Heart right ventricle (tissue), 16 donors: ENCODE measurements at regions of chr6 and their contacts with region 1.

Region 1: GRCh38 chr6:135535989-135536414 is 38.5 kb upstream of the AHI1 start:
- DNase-seq: peak in 1 of 2 donors; percentile 12
- ATAC-seq: peak in 2 of 8 donors; percentile 48 to 49
- H3K4me3 ChIP-seq: no peak overlapping the region
- H3K27ac ChIP-seq: no peak overlapping the region
- H3K4me1 ChIP-seq: peaks cover 0 to 20% (median 0%) of the 10 kb centered on the region in 9 donors
- H3K27me3 ChIP-seq: no peaks in the 10 kb centered on the region
- CTCF ChIP-seq: peak; percentile 51 to 85 (median 75)

Region 2: GRCh38 chr6:135759831-135760230 is 223.8 kb after region 1 on chr6:
- intact Hi-C with region 1: loop called in 1 of 10 experiments (anchors 10 kb)
- DNase-seq: no peak
- ATAC-seq: no peak
- H3K4me3 ChIP-seq: no peak overlapping the region
- H3K27ac ChIP-seq: no peak overlapping the region
- H3K4me1 ChIP-seq: no peaks in the 10 kb centered on the region
- H3K27me3 ChIP-seq: no peaks in the 10 kb centered on the region
- CTCF ChIP-seq: peak in 3 of 9 donors; percentile 12 to 29 (median 14)

Region 3: DNA sequence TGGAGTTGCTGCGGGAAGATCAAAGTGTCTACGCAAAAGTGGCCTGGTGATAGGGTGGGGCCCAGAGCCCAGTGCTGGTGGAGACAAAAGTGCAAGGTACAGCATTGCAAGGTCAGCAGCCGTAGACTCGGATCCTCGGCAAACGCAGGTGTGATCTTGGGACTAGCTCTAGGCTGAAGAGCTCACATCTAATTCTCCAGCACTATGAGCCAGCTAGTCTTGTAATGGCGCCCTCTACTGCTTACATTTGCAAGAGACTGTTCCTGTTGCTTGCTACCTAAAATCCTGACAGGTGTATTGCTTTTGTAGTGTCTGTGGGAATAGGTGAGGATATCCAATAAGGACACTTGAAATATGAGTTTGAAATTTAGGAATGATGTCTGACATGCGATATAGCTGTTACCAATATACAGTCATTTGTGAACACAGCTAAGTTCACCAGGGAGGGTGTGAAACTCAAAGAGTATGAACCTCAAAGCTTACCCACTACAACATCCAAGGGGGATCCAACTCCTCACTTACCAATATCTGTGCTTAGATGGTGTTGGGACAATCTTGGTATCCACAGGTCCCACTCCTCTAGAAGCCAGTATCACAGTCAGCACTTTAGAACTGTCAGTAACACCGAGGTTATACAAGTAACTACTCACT is 373.9 kb after region 1 on chr6:
- intact Hi-C with region 1: loop called in 1 of 10 experiments (anchors 10 kb)
- DNase-seq: peak in 1 of 2 donors; percentile 38
- ATAC-seq: peak in 2 of 8 donors; percentile 35 to 45
- H3K4me3 ChIP-seq: no peak overlapping the region
- H3K27ac ChIP-seq: no peak overlapping the region
- H3K4me1 ChIP-seq: peaks cover 0 to 6% (median 0%) of the 10 kb centered on the region in 9 donors
- H3K27me3 ChIP-seq: no peaks in the 10 kb centered on the region
- CTCF ChIP-seq: peak in 7 of 9 donors; percentile 34 to 67 (median 52)

Region 4: DNA sequence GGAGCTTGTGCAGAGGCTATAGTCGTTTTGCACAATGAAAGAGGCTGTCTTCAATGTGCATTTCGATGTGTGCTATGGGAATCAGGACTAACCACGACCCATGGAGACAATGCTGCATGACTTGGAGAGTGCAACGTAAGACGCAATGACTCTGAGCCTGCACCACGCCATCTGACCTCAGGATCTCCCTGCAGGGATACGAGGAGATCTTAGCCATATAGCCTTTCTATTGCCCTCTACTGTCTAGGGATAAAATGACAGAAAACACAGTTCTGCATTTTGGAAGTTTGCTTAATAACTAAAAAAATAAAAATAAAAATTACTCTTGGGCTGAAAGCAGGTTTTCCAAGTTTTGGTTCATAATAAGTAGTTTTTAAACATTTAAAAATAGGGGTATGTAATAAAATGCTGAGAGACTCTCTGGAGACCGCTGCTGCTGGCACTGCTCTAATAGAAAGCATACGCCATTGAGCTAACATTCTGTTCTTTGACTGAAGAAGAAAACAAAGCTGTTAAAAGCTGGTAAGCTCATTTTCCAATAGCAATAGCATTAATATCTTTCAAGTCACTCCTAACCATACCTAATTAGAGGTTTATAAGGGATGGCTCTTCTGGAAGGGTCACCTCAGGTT is 402.7 kb after region 1 on chr6:
- intact Hi-C with region 1: loop called in 2 of 10 experiments (anchors 10 kb)
- DNase-seq: peak; percentile 26 to 36
- ATAC-seq: peak; percentile 62 to 84 (median 80)
- H3K4me3 ChIP-seq: peak overlapping the region in 6 of 10 donors; percentile 5 to 27 (median 20)
- H3K27ac ChIP-seq: peak overlapping the region; percentile 16 to 79 (median 70)
- H3K4me1 ChIP-seq: peaks cover 0 to 15% (median 3%) of the 10 kb centered on the region in 9 donors
- H3K27me3 ChIP-seq: no peaks in the 10 kb centered on the region
- CTCF ChIP-seq: peak in 8 of 9 donors; percentile 13 to 64 (median 48)

Region 5: DNA sequence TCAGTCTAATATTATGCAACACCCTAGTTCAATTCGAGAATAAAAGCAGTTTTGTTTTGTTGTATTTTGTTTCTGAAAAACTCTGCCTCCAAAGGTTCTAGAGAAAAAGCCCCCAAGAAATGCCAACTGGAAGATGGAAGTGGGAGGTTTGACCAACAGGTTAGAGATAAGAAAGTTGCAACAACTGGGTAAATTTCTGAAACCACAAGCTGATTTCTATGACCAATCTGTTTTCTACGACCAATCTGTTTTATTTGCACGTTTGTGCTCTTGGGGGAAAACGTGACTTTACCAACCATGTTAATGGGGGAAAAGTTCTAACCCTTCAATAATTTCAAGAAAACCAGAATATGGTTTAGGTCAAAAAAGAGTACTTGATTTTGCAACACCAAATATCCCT is 488.7 kb after region 1 on chr6:
- intact Hi-C with region 1: loop called in 1 of 10 experiments (anchors 10 kb)
- DNase-seq: no peak
- ATAC-seq: no peak
- H3K4me3 ChIP-seq: no peak overlapping the region
- H3K27ac ChIP-seq: no peak overlapping the region
- H3K4me1 ChIP-seq: no peaks in the 10 kb centered on the region
- H3K27me3 ChIP-seq: no peaks in the 10 kb centered on the region
- CTCF ChIP-seq: no peak

Region 6: DNA sequence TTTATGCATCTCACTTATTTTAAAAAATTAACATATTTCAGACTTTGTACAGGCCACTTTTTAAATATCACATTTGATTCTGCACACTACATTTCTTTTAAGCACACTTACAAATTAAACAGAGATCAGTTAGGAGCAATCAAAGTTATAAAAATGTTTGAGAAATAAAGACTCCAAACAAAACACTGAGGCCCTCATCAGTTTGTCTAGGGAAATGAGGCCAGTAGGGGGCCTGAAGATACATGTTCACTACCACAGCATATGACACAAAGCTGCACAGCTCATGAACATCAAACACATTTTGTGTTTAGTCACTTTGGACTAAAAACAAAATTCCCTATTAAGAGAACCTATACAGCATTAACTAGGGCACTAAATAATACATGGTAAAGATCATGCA is 496.0 kb after region 1 on chr6:
- intact Hi-C with region 1: loop called in 2 of 10 experiments (anchors 10 kb)
- DNase-seq: peak in 1 of 2 donors; percentile 46
- ATAC-seq: peak in 7 of 8 donors; percentile 46 to 68 (median 53)
- H3K4me3 ChIP-seq: no peak overlapping the region
- H3K27ac ChIP-seq: no peak overlapping the region
- H3K4me1 ChIP-seq: peaks cover 4 to 52% (median 32%) of the 10 kb centered on the region in 9 donors
- H3K27me3 ChIP-seq: no peaks in the 10 kb centered on the region
- CTCF ChIP-seq: peak in 8 of 9 donors; percentile 28 to 72 (median 56)

Region 7: GRCh38 chr6:136317021-136317694 is 781.2 kb after region 1 on chr6:
- intact Hi-C with region 1: loop called in 7 of 10 experiments (anchors 2 to 10 kb)
- DNase-seq: peak in 1 of 2 donors; percentile 45
- ATAC-seq: peak in 5 of 8 donors; percentile 52 to 73 (median 62)
- H3K4me3 ChIP-seq: no peak overlapping the region
- H3K27ac ChIP-seq: no peak overlapping the region
- H3K4me1 ChIP-seq: no peaks in the 10 kb centered on the region
- H3K27me3 ChIP-seq: peaks cover 0 to 6% (median 0%) of the 10 kb centered on the region in 7 donors
- CTCF ChIP-seq: peak; percentile 73 to 88 (median 86)

Region 8: GRCh38 chr6:136334853-136335252 is 798.9 kb after region 1 on chr6:
- intact Hi-C with region 1: no loop called
- DNase-seq: no peak
- ATAC-seq: peak in 1 of 8 donors; percentile 18
- H3K4me3 ChIP-seq: no peak overlapping the region
- H3K27ac ChIP-seq: no peak overlapping the region
- H3K4me1 ChIP-seq: peaks cover 0 to 5% (median 0%) of the 10 kb centered on the region in 9 donors
- H3K27me3 ChIP-seq: peaks cover 0 to 13% (median 0%) of the 10 kb centered on the region in 7 donors
- CTCF ChIP-seq: no peak